ENCODE measurements at regions of chr4 and their contacts with region 1.

Region 1: DNA sequence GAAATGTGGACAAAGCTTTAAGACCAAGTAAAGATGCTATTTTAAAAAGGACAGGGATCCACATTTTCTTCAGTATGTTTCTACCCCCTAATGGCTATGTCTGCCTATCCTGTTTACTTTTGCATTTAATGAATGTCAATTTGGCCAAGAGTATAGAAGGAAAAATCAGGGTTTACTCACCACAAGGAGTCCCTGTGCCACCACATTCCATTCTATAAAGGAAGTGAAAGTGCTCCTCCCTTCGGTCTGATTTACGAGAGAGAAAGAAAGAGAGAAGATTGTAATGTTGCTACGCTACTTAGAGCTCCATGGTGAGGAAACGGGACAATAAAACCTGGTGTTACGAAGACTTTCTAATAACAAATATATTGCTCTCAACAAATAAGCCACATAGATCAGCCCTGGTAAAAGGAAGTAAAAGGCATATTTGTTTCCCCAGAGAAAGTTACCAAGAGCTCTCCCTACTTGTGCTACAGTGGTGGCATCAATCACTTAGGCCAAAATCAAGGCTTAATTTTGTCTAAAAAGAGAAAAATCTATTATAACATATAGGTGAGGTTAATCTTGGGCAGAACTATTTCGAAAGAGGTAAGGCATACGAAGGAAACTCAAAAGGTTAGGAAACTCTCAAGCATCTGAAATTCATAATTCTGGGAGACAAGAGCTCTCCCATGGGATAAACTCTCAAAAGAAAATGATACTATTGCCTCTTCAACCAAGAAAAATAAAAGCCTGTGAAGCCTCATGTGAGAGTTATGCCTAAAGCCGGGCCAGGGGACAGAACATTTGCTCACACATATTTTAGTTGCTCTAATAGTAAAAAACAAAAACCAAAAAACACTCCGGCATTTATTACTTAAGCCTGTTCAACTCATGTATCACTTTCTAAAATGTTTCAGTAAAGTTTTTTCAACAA is 29.5 kb downstream of the TAPT1 start:
- DNase-seq: no peak
- ATAC-seq: peak; percentile 89

Region 2: DNA sequence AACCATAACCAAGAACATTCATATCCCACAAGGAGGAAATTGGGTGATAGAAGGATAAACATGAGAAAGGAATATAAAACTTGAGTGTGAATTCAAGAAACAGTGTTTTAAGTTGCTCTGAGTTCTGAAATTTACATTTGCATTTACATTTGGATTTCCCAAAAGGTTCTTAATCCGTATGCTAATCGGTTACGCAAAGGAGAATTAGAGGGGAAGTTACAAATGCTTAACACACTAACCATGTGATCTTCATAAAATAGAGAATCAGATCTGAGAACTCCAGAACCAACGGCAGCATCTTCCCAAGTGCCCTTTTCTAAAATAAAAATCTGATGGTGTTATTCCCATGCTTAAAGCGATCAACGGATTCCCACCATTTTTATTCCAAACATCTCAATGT is 160.9 kb before region 1 on chr4:
- intact Hi-C with region 1: loop called (anchors 5 kb)
- DNase-seq: no peak
- ATAC-seq: no peak